Naive thymus-derived CD4-positive, alpha-beta T cell (primary cell): ENCODE measurements at regions of chr14 and their contacts with region 1.

Region 1: DNA sequence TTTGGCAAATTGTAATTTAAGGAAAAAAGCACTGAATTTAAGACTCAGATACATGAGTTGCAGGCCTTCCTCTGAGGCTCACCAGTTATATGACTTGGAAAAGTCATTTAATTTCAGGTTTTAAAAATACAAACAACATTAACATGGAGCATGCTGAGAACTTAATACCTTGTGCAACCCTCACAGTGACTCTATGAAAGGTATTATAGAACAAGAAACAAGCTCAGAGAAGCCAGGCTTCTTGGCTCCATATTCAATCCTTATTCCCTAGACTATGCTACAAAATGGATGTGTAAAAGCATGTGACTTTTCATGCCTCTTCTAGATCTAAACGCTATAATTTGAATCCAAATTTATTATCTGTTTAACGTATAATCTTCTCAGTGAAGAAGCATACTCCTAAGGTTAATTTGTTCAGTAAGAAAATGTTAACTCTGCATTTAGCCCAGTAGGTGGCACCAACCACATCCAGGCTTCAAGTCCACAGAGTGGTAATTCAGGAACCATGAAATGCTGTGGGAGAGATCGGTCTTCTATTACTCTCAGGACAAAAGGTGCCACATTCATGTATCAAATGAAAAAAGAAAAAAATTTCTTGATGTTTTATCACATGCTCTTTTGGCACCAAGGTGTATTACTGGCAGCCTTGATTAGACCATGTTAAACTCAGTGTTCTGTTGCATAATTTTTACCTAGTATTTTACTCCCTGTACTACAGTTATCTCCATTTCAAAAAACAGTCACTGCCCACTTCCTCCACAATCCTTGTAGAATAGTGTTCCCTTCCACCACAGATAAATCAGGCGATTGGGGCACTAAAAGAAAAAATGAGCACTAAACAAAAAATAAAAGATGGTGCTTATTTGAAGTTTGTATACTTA is 9.3 kb downstream of the CCDC196 start:
- DNase-seq: peak in 7 of 9 donors; percentile 11 to 44 (median 27)
- ATAC-seq: peak; percentile 83
- H3K4me3 ChIP-seq: no peak overlapping the region
- H3K4me3 Mint-ChIP-seq: peak overlapping the region in 7 of 10 donors; percentile 6 to 67 (median 14)
- H3K27ac ChIP-seq: no peak overlapping the region
- H3K27ac Mint-ChIP-seq: peak overlapping the region in 2 of 9 donors; percentile 11 to 53
- H3K4me1 ChIP-seq: peaks cover 0 to 10% of the 10 kb centered on the region in 2 donors
- H3K4me1 Mint-ChIP-seq: peaks cover 8 to 29% (median 24%) of the 10 kb centered on the region in 7 donors
- H3K27me3 ChIP-seq: no peaks in the 10 kb centered on the region
- H3K27me3 Mint-ChIP-seq: no peaks in the 10 kb centered on the region

Region 2: GRCh38 chr14:65840118-65840751 is 655.2 kb before region 1 on chr14:
- CTCF ChIA-PET with region 1: no interaction called
- POLR2A ChIA-PET with region 1: no interaction called
- intact Hi-C with region 1: no loop called
- DNase-seq: no peak
- ATAC-seq: no peak
- H3K4me3 ChIP-seq: no peak overlapping the region
- H3K4me3 Mint-ChIP-seq: peak overlapping the region in 5 of 10 donors; percentile 14 to 61 (median 38)
- H3K27ac ChIP-seq: no peak overlapping the region
- H3K27ac Mint-ChIP-seq: peak overlapping the region in 2 of 9 donors; percentile 31 to 35
- H3K4me1 ChIP-seq: peaks cover 22 to 59% of the 10 kb centered on the region in 2 donors
- H3K4me1 Mint-ChIP-seq: peaks cover 44 to 98% (median 85%) of the 10 kb centered on the region in 7 donors
- H3K27me3 ChIP-seq: no peaks in the 10 kb centered on the region
- H3K27me3 Mint-ChIP-seq: no peaks in the 10 kb centered on the region

Region 3: GRCh38 chr14:66135831-66136230 is 359.6 kb before region 1 on chr14:
- CTCF ChIA-PET with region 1: no interaction called
- POLR2A ChIA-PET with region 1: no interaction called
- intact Hi-C with region 1: no loop called
- DNase-seq: no peak
- ATAC-seq: no peak
- H3K4me3 ChIP-seq: no peak overlapping the region
- H3K4me3 Mint-ChIP-seq: no peak overlapping the region
- H3K27ac ChIP-seq: no peak overlapping the region
- H3K27ac Mint-ChIP-seq: no peak overlapping the region
- H3K4me1 ChIP-seq: peaks cover 0 to 11% of the 10 kb centered on the region in 2 donors
- H3K4me1 Mint-ChIP-seq: no peaks in the 10 kb centered on the region
- H3K27me3 ChIP-seq: no peaks in the 10 kb centered on the region
- H3K27me3 Mint-ChIP-seq: peaks cover 0 to 6% (median 0%) of the 10 kb centered on the region in 5 donors

Region 4: GRCh38 chr14:66507722-66508546 is 12.5 kb after region 1 on chr14 and contains the start of gene GPHN:
- CTCF ChIA-PET with region 1: interaction called, 3 read pairs
- POLR2A ChIA-PET with region 1: interaction called, 10 read pairs
- intact Hi-C with region 1: loop called in 1 of 2 experiments (anchors 1 kb)
- DNase-seq: peak; percentile 62 to 87 (median 82)
- ATAC-seq: peak; percentile 93
- H3K4me3 ChIP-seq: peak within 1 kb of the TSS; percentile 78
- H3K4me3 Mint-ChIP-seq: peak within 1 kb of the TSS; percentile 94 to 100 (median 99)
- H3K27ac ChIP-seq: peak within 1 kb of the TSS; percentile 70
- H3K27ac Mint-ChIP-seq: peak within 1 kb of the TSS; percentile 71 to 96 (median 91)
- H3K4me1 ChIP-seq: peaks cover 6 to 7% of the 10 kb centered on the region in 2 donors
- H3K4me1 Mint-ChIP-seq: peaks cover 16 to 42% (median 34%) of the 10 kb centered on the region in 7 donors
- H3K27me3 ChIP-seq: no peaks in the 10 kb centered on the region
- H3K27me3 Mint-ChIP-seq: peaks cover 0 to 29% (median 0%) of the 10 kb centered on the region in 5 donors
- total RNA-seq, gene GPHN: 11.8 to 28.1 (median 14.8) TPM

Region 5: GRCh38 chr14:66568220-66568619 is 72.8 kb after region 1 on chr14:
- CTCF ChIA-PET with region 1: no interaction called
- POLR2A ChIA-PET with region 1: no interaction called
- intact Hi-C with region 1: loop called in 1 of 2 experiments (anchors 1 kb)
- DNase-seq: no peak
- ATAC-seq: no peak
- H3K4me3 ChIP-seq: no peak overlapping the region
- H3K4me3 Mint-ChIP-seq: no peak overlapping the region
- H3K27ac ChIP-seq: no peak overlapping the region
- H3K27ac Mint-ChIP-seq: no peak overlapping the region
- H3K4me1 ChIP-seq: no peaks in the 10 kb centered on the region
- H3K4me1 Mint-ChIP-seq: peaks cover 0 to 35% (median 22%) of the 10 kb centered on the region in 7 donors
- H3K27me3 ChIP-seq: no peaks in the 10 kb centered on the region
- H3K27me3 Mint-ChIP-seq: no peaks in the 10 kb centered on the region

Region 6: GRCh38 chr14:66662374-66662773 is 166.9 kb after region 1 on chr14:
- CTCF ChIA-PET with region 1: interaction called, 4 read pairs
- POLR2A ChIA-PET with region 1: no interaction called
- intact Hi-C with region 1: loop called in 1 of 2 experiments (anchors 2 kb)
- DNase-seq: no peak
- ATAC-seq: no peak
- H3K4me3 ChIP-seq: no peak overlapping the region
- H3K4me3 Mint-ChIP-seq: no peak overlapping the region
- H3K27ac ChIP-seq: no peak overlapping the region
- H3K27ac Mint-ChIP-seq: no peak overlapping the region
- H3K4me1 ChIP-seq: no peaks in the 10 kb centered on the region
- H3K4me1 Mint-ChIP-seq: peaks cover 0 to 5% (median 0%) of the 10 kb centered on the region in 7 donors
- H3K27me3 ChIP-seq: no peaks in the 10 kb centered on the region
- H3K27me3 Mint-ChIP-seq: no peaks in the 10 kb centered on the region

Region 7: GRCh38 chr14:67137744-67138371 is 642.4 kb after region 1 on chr14:
- CTCF ChIA-PET with region 1: interaction called, 3 read pairs
- POLR2A ChIA-PET with region 1: no interaction called
- intact Hi-C with region 1: loop called (anchors 1 to 5 kb)
- DNase-seq: peak in 1 of 9 donors; percentile 4
- ATAC-seq: no peak
- H3K4me3 ChIP-seq: no peak overlapping the region
- H3K4me3 Mint-ChIP-seq: no peak overlapping the region
- H3K27ac ChIP-seq: no peak overlapping the region
- H3K27ac Mint-ChIP-seq: no peak overlapping the region
- H3K4me1 ChIP-seq: no peaks in the 10 kb centered on the region
- H3K4me1 Mint-ChIP-seq: peaks cover 0 to 9% (median 0%) of the 10 kb centered on the region in 7 donors
- H3K27me3 ChIP-seq: no peaks in the 10 kb centered on the region
- H3K27me3 Mint-ChIP-seq: no peaks in the 10 kb centered on the region

Region 8: GRCh38 chr14:67704484-67705089 is 1209.1 kb after region 1 on chr14:
- CTCF ChIA-PET with region 1: interaction called, 3 read pairs
- POLR2A ChIA-PET with region 1: no interaction called
- intact Hi-C with region 1: loop called in 1 of 2 experiments (anchors 5 kb)
- DNase-seq: peak in 7 of 9 donors; percentile 29 to 63 (median 52)
- ATAC-seq: peak; percentile 93
- H3K4me3 ChIP-seq: no peak overlapping the region
- H3K4me3 Mint-ChIP-seq: no peak overlapping the region
- H3K27ac ChIP-seq: no peak overlapping the region
- H3K27ac Mint-ChIP-seq: peak overlapping the region in 1 of 9 donors; percentile 38
- H3K4me1 ChIP-seq: no peaks in the 10 kb centered on the region
- H3K4me1 Mint-ChIP-seq: peaks cover 0 to 2% (median 0%) of the 10 kb centered on the region in 7 donors
- H3K27me3 ChIP-seq: no peaks in the 10 kb centered on the region
- H3K27me3 Mint-ChIP-seq: peaks cover 0 to 8% (median 0%) of the 10 kb centered on the region in 5 donors